IMR-90 (cell line): ENCODE measurements at regions of chr4 and their contacts with region 1.

Region 1: DNA sequence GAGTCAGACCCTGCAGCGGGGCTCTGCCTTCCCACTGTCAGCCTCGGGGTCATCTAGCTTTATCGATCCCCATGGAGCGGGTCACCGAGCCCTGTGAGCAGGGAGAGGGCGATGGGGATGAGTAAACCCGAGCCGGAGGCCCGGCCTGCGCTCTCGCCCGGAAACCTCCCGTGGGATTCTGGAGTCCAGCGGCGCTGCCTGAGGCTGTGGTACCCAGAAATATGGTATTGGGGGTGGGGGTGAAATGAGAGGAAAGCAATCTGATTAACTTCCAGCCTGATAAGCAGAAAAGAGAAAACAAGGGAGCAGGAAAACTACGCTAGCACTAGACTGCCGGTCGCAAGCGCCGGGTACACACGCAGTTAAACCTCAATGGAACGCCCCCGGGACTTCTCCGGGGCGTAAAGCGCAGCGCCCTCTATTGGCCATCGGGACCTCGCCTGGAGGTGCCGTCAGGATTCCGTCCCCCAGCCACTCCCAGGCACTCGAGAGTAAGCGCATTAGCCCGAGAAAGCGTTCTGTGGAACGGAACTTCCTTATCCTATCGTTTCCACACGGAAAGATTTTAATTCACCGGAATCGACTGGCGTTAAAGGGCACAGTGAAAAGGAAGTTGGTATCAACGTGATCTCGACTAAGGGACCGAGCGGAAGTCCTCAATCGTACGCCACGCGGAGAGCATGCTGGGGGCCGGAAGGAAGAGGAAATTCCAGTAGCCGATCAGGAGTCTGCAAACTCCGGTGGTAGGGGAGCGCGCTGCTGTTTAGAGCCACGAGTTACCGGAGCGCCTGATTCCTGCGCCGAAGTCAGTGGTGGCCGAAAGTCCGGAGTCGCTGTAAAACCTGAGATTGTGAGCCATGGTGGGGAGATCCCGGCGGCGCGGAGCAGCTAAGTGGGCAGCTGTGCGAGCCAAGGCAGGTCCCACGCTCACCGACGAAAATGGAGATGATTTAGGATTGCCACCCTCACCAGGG is at the start of gene UTP3:
- DNase-seq: peak; percentile 99
- ATAC-seq: peak; percentile 97
- H3K4me3 ChIP-seq: peak within 1 kb of the TSS; percentile 74
- H3K27ac ChIP-seq: peak within 1 kb of the TSS; percentile 82
- H3K4me1 ChIP-seq: peaks cover 3% of the 10 kb centered on the region
- H3K27me3 ChIP-seq: no peaks in the 10 kb centered on the region
- CTCF ChIP-seq: peak; percentile 99
- POLR2A ChIP-seq: peak; percentile 84
- RAD21 ChIP-seq: peak; percentile 76
- total RNA-seq, gene UTP3: 14.9 and 26.1 TPM in 2 replicates

Region 2: DNA sequence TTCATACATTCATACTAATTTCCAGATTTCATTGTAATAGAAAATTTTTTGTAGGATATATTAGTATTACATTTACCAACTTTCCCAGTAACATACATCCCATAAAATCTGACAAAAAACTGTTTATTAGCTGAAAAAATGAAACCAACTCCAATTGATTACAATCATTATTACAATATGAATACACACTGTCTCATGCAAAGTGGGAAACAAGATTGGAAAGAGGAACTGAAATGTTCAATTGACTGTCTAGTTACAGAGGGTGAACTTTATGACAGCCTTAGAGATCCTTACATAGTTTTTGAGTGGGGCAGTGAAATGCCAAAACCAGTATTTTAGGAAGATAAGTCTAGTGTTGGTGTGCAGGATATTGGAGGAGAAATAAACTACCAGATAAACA is 98.3 kb before region 1 on chr4:
- CTCF ChIA-PET with region 1: no interaction called
- POLR2A ChIA-PET with region 1: no interaction called
- dilution Hi-C with region 1: no loop called
- in situ Hi-C with region 1: no loop called
- intact Hi-C with region 1: no loop called
- DNase-seq: no peak
- ATAC-seq: no peak
- H3K4me3 ChIP-seq: no peak overlapping the region
- H3K27ac ChIP-seq: no peak overlapping the region
- H3K4me1 ChIP-seq: no peaks in the 10 kb centered on the region
- H3K27me3 ChIP-seq: peaks cover 3% of the 10 kb centered on the region
- CTCF ChIP-seq: no peak
- POLR2A ChIP-seq: no peak
- RAD21 ChIP-seq: no peak

Region 3: GRCh38 chr4:70601422-70602039 is 86.6 kb before region 1 on chr4:
- CTCF ChIA-PET with region 1: no interaction called
- POLR2A ChIA-PET with region 1: no interaction called
- dilution Hi-C with region 1: no loop called
- in situ Hi-C with region 1: no loop called
- intact Hi-C with region 1: loop called (anchors 1 kb)
- DNase-seq: peak; percentile 74
- ATAC-seq: peak; percentile 93
- H3K4me3 ChIP-seq: no peak overlapping the region
- H3K27ac ChIP-seq: no peak overlapping the region
- H3K4me1 ChIP-seq: peaks cover 2% of the 10 kb centered on the region; the same call in 1 of the 2 replicates
- H3K27me3 ChIP-seq: no peaks in the 10 kb centered on the region
- CTCF ChIP-seq: peak; percentile 75
- POLR2A ChIP-seq: no peak
- RAD21 ChIP-seq: peak; percentile 95

Region 4: GRCh38 chr4:70704331-70705145 is 16.4 kb after region 1 on chr4:
- CTCF ChIA-PET with region 1: interaction called, 6 read pairs
- POLR2A ChIA-PET with region 1: interaction called, 4 read pairs
- dilution Hi-C with region 1: no loop called
- in situ Hi-C with region 1: no loop called
- intact Hi-C with region 1: loop called (anchors 1 kb)
- DNase-seq: peak; percentile 67
- ATAC-seq: peak; percentile 75
- H3K4me3 ChIP-seq: peak overlapping the region; percentile 67
- H3K27ac ChIP-seq: peak overlapping the region; percentile 93
- H3K4me1 ChIP-seq: peaks cover 4% of the 10 kb centered on the region; the same call in 1 of the 2 replicates
- H3K27me3 ChIP-seq: no peaks in the 10 kb centered on the region
- CTCF ChIP-seq: peak; percentile 42
- POLR2A ChIP-seq: no peak
- RAD21 ChIP-seq: no peak

Region 5: GRCh38 chr4:70749313-70749712 is 61.2 kb after region 1 on chr4:
- CTCF ChIA-PET with region 1: no interaction called
- POLR2A ChIA-PET with region 1: no interaction called
- dilution Hi-C with region 1: no loop called
- in situ Hi-C with region 1: no loop called
- intact Hi-C with region 1: no loop called
- DNase-seq: peak; percentile 57
- ATAC-seq: no peak; the same call in 1 of the 2 replicates
- H3K4me3 ChIP-seq: no peak overlapping the region
- H3K27ac ChIP-seq: no peak overlapping the region
- H3K4me1 ChIP-seq: peaks cover 2% of the 10 kb centered on the region; the same call in 1 of the 2 replicates
- H3K27me3 ChIP-seq: no peaks in the 10 kb centered on the region
- CTCF ChIP-seq: no peak
- POLR2A ChIP-seq: no peak
- RAD21 ChIP-seq: no peak

Region 6: DNA sequence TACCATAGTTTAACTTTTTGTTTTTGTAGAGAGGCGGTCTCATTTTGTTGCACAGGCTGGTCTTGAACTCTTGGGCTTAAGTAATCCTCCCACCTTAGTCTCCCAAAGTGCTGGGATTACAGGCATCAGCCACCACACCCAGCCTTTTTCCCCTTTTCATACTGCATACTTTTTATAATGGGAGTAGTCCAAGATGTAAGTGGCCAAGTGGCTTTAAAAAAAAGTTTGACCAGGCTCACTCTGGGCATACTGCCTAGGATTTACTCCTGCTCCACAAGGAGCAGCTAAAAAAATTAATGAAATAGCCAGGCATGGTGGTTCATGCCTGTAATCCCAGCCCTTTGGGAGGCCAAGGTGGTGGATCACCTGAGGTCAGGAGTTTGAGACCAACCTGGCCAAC is 145.6 kb after region 1 on chr4:
- CTCF ChIA-PET with region 1: no interaction called
- POLR2A ChIA-PET with region 1: no interaction called
- dilution Hi-C with region 1: no loop called
- in situ Hi-C with region 1: no loop called
- intact Hi-C with region 1: no loop called
- DNase-seq: peak; percentile 16
- ATAC-seq: no peak; the same call in 1 of the 2 replicates
- H3K4me3 ChIP-seq: no peak overlapping the region
- H3K27ac ChIP-seq: no peak overlapping the region
- H3K4me1 ChIP-seq: peaks cover 8% of the 10 kb centered on the region
- H3K27me3 ChIP-seq: no peaks in the 10 kb centered on the region
- CTCF ChIP-seq: no peak
- POLR2A ChIP-seq: no peak
- RAD21 ChIP-seq: no peak

Region 7: GRCh38 chr4:70901984-70902576 is 214.0 kb after region 1 on chr4 and contains the start of gene MOB1B:
- CTCF ChIA-PET with region 1: no interaction called
- POLR2A ChIA-PET with region 1: no interaction called
- dilution Hi-C with region 1: no loop called
- in situ Hi-C with region 1: no loop called
- intact Hi-C with region 1: loop called (anchors 5 kb)
- DNase-seq: peak; percentile 88
- ATAC-seq: peak; percentile 96
- H3K4me3 ChIP-seq: peak within 1 kb of the TSS; percentile 83
- H3K27ac ChIP-seq: peak within 1 kb of the TSS; percentile 88
- H3K4me1 ChIP-seq: 0 out of 2 replicates have a peak, but pooled peaks cover 1% of the 10 kb centered on the region
- H3K27me3 ChIP-seq: no peaks in the 10 kb centered on the region
- CTCF ChIP-seq: peak; percentile 45
- POLR2A ChIP-seq: peak; percentile 78
- RAD21 ChIP-seq: peak; percentile 43; the same call in 1 of the 2 replicates
- total RNA-seq, gene MOB1B: 5.7 and 15.0 TPM in 2 replicates

Region 8: GRCh38 chr4:71009890-71010588 is 321.9 kb after region 1 on chr4:
- CTCF ChIA-PET with region 1: no interaction called
- POLR2A ChIA-PET with region 1: no interaction called
- dilution Hi-C with region 1: no loop called
- in situ Hi-C with region 1: no loop called
- intact Hi-C with region 1: loop called (anchors 5 kb)
- DNase-seq: peak; percentile 56
- ATAC-seq: peak; percentile 59
- H3K4me3 ChIP-seq: no peak overlapping the region
- H3K27ac ChIP-seq: no peak overlapping the region
- H3K4me1 ChIP-seq: peaks cover 8% of the 10 kb centered on the region
- H3K27me3 ChIP-seq: no peaks in the 10 kb centered on the region
- CTCF ChIP-seq: peak; percentile 58
- POLR2A ChIP-seq: no peak
- RAD21 ChIP-seq: peak; percentile 30